AG04450 (cell line): ENCODE measurements at regions of chr2 and their contacts with region 1.

Region 1: GRCh38 chr2:189674374-189675112 is at the start of gene ANKAR:
- DNase-seq: peak; percentile 70
- H3K4me3 ChIP-seq: peak within 1 kb of the TSS; percentile 72
- H3K27ac ChIP-seq: peak within 1 kb of the TSS; percentile 93
- H3K27me3 ChIP-seq: no peaks in the 10 kb centered on the region
- CTCF ChIP-seq: peak; percentile 71
- polyA plus RNA-seq, gene ANKAR: 1.9 and 3.5 TPM in 2 replicates

Region 2: GRCh38 chr2:189129971-189130370 is 544.6 kb before region 1 on chr2:
- CTCF ChIA-PET with region 1: no interaction called
- POLR2A ChIA-PET with region 1: no interaction called
- DNase-seq: peak; percentile 61
- H3K4me3 ChIP-seq: no peak overlapping the region
- H3K27ac ChIP-seq: no peak overlapping the region
- H3K27me3 ChIP-seq: no peaks in the 10 kb centered on the region
- CTCF ChIP-seq: no peak

Region 3: DNA sequence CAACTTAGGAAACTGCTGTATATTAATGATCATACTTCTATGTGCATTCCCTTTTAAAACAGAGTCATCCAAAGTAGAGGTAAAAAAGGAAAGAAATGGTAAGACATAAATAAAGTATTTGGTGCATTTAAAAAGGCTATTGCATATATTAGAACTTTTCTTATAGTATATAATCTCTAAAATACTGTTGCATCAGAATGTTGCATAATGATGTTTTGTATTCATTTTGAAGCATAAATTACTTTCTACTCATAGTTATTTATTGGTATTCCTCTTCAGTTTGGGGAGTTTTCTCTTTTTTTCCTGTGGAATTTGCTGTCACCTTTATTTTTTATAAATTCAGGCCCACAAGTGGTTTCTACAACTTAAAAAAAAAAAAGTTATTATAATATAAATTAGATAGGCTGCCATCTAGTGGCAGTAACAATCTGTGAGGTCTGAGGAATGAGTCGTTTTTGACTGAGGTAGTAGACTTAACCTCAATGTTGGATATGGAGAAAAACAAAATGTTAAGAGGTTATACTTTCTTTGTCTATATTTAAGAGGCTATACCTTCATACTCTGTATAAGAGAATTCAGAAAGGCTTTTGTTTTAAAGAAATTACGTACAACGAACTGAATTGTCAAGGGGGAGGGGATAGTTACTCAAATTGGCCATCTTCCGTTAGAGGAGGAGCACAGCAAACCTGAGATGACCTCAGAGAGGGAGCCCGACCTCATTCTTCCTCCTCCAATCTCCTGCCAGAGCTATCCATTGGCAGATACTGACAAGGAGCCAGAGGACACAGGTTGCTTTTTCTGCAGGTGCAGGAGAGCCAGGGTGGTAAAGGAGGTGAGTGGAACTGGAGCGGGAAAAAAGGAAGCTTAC is 23.7 kb after region 1 on chr2:
- CTCF ChIA-PET with region 1: interaction called, 36 read pairs
- POLR2A ChIA-PET with region 1: no interaction called
- DNase-seq: no peak
- H3K4me3 ChIP-seq: no peak overlapping the region
- H3K27ac ChIP-seq: no peak overlapping the region
- H3K27me3 ChIP-seq: no peaks in the 10 kb centered on the region
- CTCF ChIP-seq: peak; percentile 65

Region 4: GRCh38 chr2:189762551-189763298 is 88.2 kb after region 1 on chr2 and contains the start of gene OSGEPL1:
- CTCF ChIA-PET with region 1: interaction called, 20 read pairs
- POLR2A ChIA-PET with region 1: interaction called, 4 read pairs
- DNase-seq: peak; percentile 71
- H3K4me3 ChIP-seq: peak within 1 kb of the TSS; percentile 75
- H3K27ac ChIP-seq: peak within 1 kb of the TSS; percentile 78
- H3K27me3 ChIP-seq: no peaks in the 10 kb centered on the region
- CTCF ChIP-seq: peak; percentile 72
- polyA plus RNA-seq, gene OSGEPL1: 3.9 and 6.0 TPM in 2 replicates